Activated T-helper 2 cell treated with anti-CD3 and anti-CD28 coated beads, Interferon-gamma antibody, Interleukin-2, Interleukin-4, amounts not matched to agents 10 μg/mL and 5 μg/mL and 100 μg/mL, durations not matched to agents 14 hours and 24 hours and 36 hours (primary cell): ENCODE measurements at regions of chrX and their contacts with region 1.

Region 1: DNA sequence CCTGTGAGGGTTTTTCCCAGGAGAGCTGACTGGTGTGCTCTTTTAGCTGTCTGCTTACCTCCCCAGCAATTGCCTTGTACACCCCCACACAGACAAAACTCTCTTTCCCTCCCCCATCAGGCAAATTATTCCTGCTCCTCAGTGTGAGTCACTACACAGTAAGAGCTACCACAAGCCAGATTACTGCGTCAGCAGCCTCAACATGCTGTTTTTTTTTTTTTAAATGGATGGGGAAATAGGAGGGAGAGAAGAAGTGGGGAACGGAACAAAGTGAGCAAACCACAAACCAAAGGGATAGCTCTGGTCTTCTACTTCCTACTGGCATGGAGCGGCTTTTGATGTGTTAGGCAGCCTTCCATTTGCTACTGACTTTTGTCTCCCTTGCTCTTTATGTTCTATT is 107.5 kb upstream of the ACSL4 start:
- DNase-seq: no peak
- H3K4me3 Mint-ChIP-seq: no peak overlapping the region
- H3K27ac Mint-ChIP-seq: no peak overlapping the region
- H3K4me1 Mint-ChIP-seq: peaks cover 26% of the 10 kb centered on the region
- H3K27me3 Mint-ChIP-seq: no peaks in the 10 kb centered on the region

Region 2: GRCh38 chrX:109714340-109714958 is 126.1 kb before region 1 on chrX:
- intact Hi-C with region 1: loop called (anchors 5 kb)
- DNase-seq: no peak
- H3K4me3 Mint-ChIP-seq: no peak overlapping the region
- H3K27ac Mint-ChIP-seq: no peak overlapping the region
- H3K4me1 Mint-ChIP-seq: peaks cover 30% of the 10 kb centered on the region
- H3K27me3 Mint-ChIP-seq: no peaks in the 10 kb centered on the region

Region 3: GRCh38 chrX:109732780-109733657 is 107.6 kb before region 1 on chrX and contains the start of gene ACSL4:
- intact Hi-C with region 1: loop called (anchors 1 kb)
- DNase-seq: peak; percentile 78
- H3K4me3 Mint-ChIP-seq: peak within 1 kb of the TSS; percentile 93
- H3K27ac Mint-ChIP-seq: peak within 1 kb of the TSS; percentile 95
- H3K4me1 Mint-ChIP-seq: peaks cover 29% of the 10 kb centered on the region
- H3K27me3 Mint-ChIP-seq: no peaks in the 10 kb centered on the region
- total RNA-seq, gene ACSL4: 101 and 102 TPM in 2 replicates

Region 4: DNA sequence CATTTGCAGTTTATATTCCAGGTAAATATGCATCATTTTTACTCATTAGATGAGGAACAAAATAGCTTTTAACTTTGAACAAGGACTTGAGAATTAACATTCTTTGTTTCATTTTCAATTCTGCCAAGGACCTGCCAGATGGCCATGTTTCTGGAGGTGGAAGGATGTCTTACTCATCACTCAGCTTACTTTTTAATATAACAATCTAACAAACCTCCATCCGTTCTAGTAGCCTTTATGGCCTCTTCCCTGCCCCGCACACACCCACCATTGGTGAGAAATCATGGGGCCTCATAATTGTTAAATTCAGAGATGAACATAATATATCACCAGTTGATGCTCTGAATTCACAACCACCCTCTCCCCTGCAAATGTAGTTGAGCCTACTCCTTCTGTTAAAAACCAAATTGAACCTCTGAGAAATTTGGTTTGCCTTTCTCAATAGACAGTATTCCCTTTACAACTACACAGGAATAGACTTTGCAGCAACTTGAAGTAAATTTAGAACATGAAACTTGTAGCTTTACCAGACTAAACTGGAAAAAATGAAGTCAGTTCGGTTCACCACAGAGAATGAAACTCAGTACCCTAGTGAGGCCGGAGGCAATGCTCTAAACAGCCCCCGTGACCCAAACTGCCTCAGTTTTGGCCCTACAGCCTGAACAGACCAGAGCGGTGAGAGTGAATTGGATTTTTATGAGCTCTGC is 57.4 kb before region 1 on chrX:
- intact Hi-C with region 1: loop called (anchors 1 kb)
- DNase-seq: no peak
- H3K4me3 Mint-ChIP-seq: peak overlapping the region; percentile 79
- H3K27ac Mint-ChIP-seq: peak overlapping the region; percentile 98
- H3K4me1 Mint-ChIP-seq: peaks cover 39% of the 10 kb centered on the region
- H3K27me3 Mint-ChIP-seq: no peaks in the 10 kb centered on the region

Region 5: DNA sequence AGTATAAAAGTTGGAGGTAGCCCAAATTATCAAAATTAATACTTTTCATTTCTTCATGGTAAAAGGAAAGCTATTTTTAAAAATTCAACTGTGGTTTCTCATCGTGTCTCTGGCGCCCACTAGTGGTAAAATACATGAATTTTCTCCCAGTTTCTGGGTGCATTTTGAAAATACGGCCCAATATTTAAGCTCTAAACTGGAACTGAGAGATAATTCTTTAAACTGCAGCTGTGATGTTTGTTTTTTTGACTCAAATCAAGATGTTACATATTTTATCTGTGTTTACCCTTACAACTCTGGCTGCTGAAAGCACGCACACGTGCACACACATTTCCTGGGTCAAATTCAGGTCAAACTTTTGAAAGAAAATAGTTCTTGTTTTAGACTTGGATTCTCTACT is 16.4 kb after region 1 on chrX:
- intact Hi-C with region 1: loop called (anchors 2 kb)
- DNase-seq: no peak
- H3K4me3 Mint-ChIP-seq: no peak overlapping the region
- H3K27ac Mint-ChIP-seq: no peak overlapping the region
- H3K4me1 Mint-ChIP-seq: peaks cover 18% of the 10 kb centered on the region
- H3K27me3 Mint-ChIP-seq: no peaks in the 10 kb centered on the region

Region 6: DNA sequence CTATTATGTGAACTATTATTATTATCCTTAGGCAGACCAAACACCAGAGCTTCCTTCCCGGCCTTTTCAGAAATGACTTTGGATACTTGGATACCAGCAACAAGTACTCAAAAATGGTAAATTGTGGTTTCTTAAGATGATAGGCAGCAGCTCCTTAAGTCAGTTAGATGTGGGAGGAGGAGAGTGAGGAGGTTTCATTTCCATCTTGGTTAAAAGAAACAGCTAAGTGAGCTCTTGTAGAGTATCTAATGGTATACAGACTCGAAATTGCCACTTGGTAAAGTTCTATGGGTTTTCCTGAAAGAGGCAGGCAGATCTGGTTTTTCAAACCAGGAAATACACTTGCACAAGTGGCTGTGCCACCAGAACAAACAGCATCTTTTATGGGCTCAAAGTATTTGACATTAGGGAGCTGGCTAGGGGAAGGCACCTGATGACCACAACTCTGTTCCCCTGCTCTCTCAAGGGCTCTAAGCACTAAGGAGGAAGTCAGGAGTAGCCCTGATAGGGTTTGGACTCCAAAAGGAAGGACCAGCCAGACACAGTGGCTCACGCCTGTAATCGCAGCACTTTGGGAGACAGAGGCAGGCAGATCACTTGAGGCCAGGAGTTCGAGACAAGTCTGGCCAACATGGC is 293.3 kb after region 1 on chrX:
- intact Hi-C with region 1: loop called (anchors 5 kb)
- DNase-seq: no peak
- H3K4me3 Mint-ChIP-seq: no peak overlapping the region
- H3K27ac Mint-ChIP-seq: peak overlapping the region; percentile 87
- H3K4me1 Mint-ChIP-seq: peaks cover 14% of the 10 kb centered on the region
- H3K27me3 Mint-ChIP-seq: no peaks in the 10 kb centered on the region